ENCODE measurements at regions of chr12 and their contacts with region 1.

Region 1: GRCh38 chr12:11648831-11649702 is at the start of gene ETV6:
- DNase-seq: peak; percentile 90
- H3K4me3 ChIP-seq: peak within 1 kb of the TSS; percentile 69 to 99 (median 92)
- H3K27ac ChIP-seq: peak within 1 kb of the TSS; percentile 97
- H3K4me1 ChIP-seq: peaks cover 21% of the 10 kb centered on the region
- H3K27me3 ChIP-seq: no peaks in the 10 kb centered on the region
- CTCF ChIP-seq: no peak
- total RNA-seq, gene ETV6: 16.7 to 28.3 TPM

Region 2: DNA sequence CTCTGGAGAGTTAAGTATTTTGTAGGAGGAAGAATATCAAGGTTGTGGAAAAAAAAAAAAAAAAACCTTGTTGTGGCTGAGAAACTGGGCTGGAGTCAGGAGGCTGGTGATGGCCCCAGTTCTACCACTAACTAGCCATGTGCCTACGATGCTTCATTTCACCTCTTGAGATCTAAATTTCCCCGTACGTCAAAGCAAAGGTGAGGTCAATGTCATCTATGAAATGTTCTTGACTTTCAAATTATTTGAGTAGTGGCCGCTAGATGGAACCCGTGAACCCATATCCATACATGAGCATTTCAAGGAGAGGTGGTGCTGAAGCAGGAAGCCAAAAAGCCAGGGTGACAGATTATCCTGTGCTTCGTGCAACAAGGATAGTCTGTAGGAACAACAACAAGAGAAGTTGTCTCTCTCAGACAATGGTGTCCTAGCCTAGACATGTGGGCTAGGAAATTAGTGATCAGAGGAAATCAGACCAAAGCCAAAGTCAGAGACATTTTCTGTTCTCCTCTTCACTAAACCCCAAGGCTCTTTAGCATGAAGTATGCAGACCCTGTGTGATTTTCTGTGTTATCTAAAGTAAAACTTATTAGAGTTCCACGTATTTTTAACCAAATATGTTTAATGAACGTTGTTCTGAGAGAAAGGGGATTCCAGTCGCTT is 95.1 kb before region 1 on chr12:
- CTCF ChIA-PET with region 1: no interaction called
- dilution Hi-C with region 1: no loop called
- in situ Hi-C with region 1: no loop called
- intact Hi-C with region 1: loop called (anchors 1 kb)
- DNase-seq: peak; percentile 49
- H3K4me3 ChIP-seq: no peak overlapping the region
- H3K27ac ChIP-seq: no peak overlapping the region
- H3K4me1 ChIP-seq: no peaks in the 10 kb centered on the region
- H3K27me3 ChIP-seq: no peaks in the 10 kb centered on the region
- CTCF ChIP-seq: peak; percentile 52 to 71

Region 3: GRCh38 chr12:11705010-11705409 is 55.9 kb after region 1 on chr12:
- CTCF ChIA-PET with region 1: no interaction called
- dilution Hi-C with region 1: no loop called
- in situ Hi-C with region 1: no loop called
- intact Hi-C with region 1: loop called (anchors 5 kb)
- DNase-seq: peak; percentile 91
- H3K4me3 ChIP-seq: no peak overlapping the region
- H3K27ac ChIP-seq: peak overlapping the region; percentile 71
- H3K4me1 ChIP-seq: peaks cover 32% of the 10 kb centered on the region
- H3K27me3 ChIP-seq: no peaks in the 10 kb centered on the region
- CTCF ChIP-seq: no peak

Region 4: GRCh38 chr12:11798856-11799501 is 149.9 kb after region 1 on chr12:
- CTCF ChIA-PET with region 1: no interaction called
- dilution Hi-C with region 1: no loop called
- in situ Hi-C with region 1: no loop called
- intact Hi-C with region 1: loop called (anchors 5 kb)
- DNase-seq: peak; percentile 92
- H3K4me3 ChIP-seq: no peak overlapping the region
- H3K27ac ChIP-seq: peak overlapping the region; percentile 75
- H3K4me1 ChIP-seq: peaks cover 60% of the 10 kb centered on the region
- H3K27me3 ChIP-seq: no peaks in the 10 kb centered on the region
- CTCF ChIP-seq: no peak

Region 5: DNA sequence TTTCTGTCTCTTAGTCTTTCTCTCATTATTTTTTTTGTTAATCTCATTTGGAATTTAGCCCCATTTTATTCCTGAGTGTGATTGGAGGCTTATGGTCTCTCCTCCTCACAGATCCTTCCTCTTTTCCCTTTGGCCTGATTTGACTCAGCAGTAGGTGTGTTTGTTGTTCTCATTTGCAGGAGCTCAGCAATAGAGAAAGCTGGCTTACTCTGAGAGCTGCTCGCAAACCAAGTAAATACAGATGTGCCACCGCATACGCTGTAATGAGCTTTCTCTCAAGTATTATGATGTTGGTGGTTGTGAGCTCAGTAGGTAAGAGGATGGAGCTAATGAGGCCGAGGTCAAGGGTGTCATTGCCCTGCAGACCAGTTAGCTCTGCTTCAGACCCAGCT is 206.9 kb after region 1 on chr12:
- CTCF ChIA-PET with region 1: no interaction called
- dilution Hi-C with region 1: no loop called
- in situ Hi-C with region 1: no loop called
- intact Hi-C with region 1: loop called (anchors 1 kb)
- DNase-seq: no peak
- H3K4me3 ChIP-seq: no peak overlapping the region
- H3K27ac ChIP-seq: no peak overlapping the region
- H3K4me1 ChIP-seq: peaks cover 29% of the 10 kb centered on the region
- H3K27me3 ChIP-seq: no peaks in the 10 kb centered on the region
- CTCF ChIP-seq: no peak

Region 6: GRCh38 chr12:11885261-11886038 is 236.4 kb after region 1 on chr12:
- CTCF ChIA-PET with region 1: no interaction called
- dilution Hi-C with region 1: no loop called
- in situ Hi-C with region 1: no loop called
- intact Hi-C with region 1: loop called (anchors 2 kb)
- DNase-seq: peak; percentile 96
- H3K4me3 ChIP-seq: no peak overlapping the region
- H3K27ac ChIP-seq: peak overlapping the region; percentile 89
- H3K4me1 ChIP-seq: peaks cover 34% of the 10 kb centered on the region
- H3K27me3 ChIP-seq: no peaks in the 10 kb centered on the region
- CTCF ChIP-seq: no peak

Region 7: DNA sequence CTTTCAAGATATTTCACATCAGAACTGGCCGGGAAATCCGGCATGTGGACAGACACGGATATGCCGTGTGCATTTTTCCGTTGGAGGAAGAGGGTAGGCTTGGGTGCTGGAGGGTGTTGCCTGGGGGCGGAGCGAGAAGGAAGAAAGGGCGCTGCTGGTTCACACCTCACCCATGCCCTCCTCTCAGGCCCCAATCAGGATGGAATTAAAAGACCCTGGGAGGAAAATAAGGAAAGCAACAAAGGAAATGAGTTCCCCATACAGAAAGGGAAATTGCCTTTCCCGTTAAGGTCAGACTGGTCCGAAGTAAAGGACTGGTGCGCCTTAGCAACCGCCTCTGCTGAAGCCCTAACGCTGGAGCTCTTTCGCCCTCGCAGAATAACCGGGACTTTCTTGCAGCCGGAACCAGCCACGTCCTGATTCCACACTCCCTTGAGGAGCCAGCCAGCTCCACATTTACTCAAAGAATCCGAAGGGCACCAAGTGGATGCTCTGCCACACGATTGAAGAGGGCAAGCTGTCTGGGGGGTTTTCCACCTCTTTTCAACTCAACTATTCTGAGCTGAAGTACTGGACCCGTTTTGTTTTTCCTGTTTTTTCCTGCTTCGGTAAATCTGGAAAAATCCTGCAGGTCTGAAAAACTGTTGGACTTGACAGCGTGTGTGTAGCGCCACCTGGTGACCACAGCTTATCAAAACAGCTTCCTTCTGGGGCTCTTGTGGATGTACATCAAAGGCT is 384.0 kb after region 1 on chr12:
- CTCF ChIA-PET with region 1: no interaction called
- dilution Hi-C with region 1: no loop called
- in situ Hi-C with region 1: no loop called
- intact Hi-C with region 1: loop called (anchors 1 kb)
- DNase-seq: peak; percentile 72
- H3K4me3 ChIP-seq: peak overlapping the region; percentile 11 to 33 (median 26)
- H3K27ac ChIP-seq: no peak overlapping the region
- H3K4me1 ChIP-seq: no peaks in the 10 kb centered on the region
- H3K27me3 ChIP-seq: no peaks in the 10 kb centered on the region
- CTCF ChIP-seq: peak; percentile 79 to 90

Measured in mammary epithelial cell (primary cell).